Endothelial cell of umbilical vein (primary cell): ENCODE measurements at regions of chr12 and their contacts with region 1.

Region 1: DNA sequence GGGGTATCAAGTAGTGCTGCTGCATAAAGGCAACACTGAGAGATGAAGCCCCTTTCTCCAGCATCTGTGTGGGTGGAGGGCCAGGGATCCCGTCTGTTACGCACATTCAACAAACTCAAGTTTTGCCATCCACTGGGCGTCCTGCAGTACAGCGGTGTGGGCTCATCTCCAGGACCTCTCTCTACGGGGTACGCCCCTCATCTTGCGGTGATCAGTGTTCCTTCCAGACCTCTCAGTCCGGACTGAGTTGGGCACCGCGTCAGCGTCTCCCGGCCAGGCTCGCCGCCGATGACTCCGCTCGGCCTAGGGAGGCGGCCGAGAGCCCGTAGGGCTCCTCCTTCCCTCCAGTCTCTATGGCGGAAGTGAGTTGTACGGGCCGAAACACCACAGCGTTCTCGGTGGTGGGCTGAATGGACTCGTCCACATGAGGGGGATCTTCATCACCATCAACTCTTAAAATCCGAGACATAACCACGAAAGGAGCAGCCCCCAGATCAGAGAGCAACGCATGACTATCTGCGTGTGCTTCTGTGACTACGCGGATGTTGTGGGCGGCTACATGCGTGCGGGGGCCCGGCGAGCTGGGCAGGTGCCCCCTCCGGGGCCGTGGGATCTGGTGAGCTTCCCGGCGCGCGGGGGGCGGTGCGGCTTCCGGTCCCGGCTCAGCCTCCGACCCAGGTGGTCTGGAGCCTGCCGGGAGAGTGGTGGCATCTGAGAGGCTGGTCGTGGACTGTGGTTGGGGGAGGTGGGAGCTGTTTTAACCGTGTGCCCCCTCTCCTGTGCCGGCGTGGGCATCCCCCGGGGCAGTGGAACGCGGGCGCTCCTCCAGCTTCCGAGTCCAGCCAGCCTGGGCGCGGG is at the start of gene ATG101:
- DNase-seq: peak; percentile 95
- H3K4me3 ChIP-seq: peak within 1 kb of the TSS; percentile 69 to 81 (median 73)
- H3K27ac ChIP-seq: peak within 1 kb of the TSS; percentile 93
- H3K4me1 ChIP-seq: peaks cover 12% of the 10 kb centered on the region
- H3K27me3 ChIP-seq: no peaks in the 10 kb centered on the region
- CTCF ChIP-seq: peak; percentile 83 to 90
- POLR2A ChIP-seq: peak; percentile 83
- total RNA-seq, gene ATG101: 41.6 and 43.3 TPM in 2 replicates

Region 2: DNA sequence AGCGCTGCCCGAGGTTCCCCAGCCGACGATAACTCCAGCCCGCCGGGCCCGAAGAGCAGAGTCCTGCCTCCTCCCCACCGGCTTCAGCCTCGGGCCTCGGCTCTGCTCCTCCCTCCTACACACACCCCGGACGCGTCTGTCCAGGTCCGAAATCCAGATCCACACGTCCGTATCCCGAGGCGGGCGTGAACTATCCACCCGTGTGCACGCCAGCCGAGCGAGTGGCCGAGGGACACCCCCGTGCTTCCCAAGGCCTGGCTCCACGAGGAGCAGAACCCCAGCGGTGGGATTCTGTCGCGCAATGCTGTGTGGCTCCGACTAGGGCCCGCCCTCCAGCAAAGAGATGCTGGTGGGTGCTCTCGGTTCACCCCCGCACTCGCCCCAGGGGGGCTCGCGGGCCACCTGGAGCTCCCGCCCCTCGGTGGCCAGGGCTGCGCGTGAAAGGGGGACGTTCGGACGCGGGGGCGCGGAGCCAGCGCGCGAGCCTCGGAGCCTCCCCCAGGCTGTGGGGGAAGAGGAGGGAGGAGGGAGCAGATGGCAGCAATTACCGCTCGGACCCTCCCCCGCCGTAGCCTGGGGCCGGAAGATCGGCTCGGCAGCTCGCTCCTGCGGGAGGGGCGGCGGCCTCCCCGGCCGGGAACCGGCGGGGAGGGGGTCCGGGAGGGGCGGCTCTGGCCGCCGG is 200.6 kb before region 1 on chr12:
- CTCF ChIA-PET with region 1: no interaction called
- POLR2A ChIA-PET with region 1: no interaction called
- dilution Hi-C with region 1: no loop called
- intact Hi-C with region 1: no loop called
- DNase-seq: no peak
- H3K4me3 ChIP-seq: peak overlapping the region; percentile 13 to 23 (median 22)
- H3K27ac ChIP-seq: no peak overlapping the region
- H3K4me1 ChIP-seq: peaks cover 6% of the 10 kb centered on the region
- H3K27me3 ChIP-seq: no peaks in the 10 kb centered on the region
- CTCF ChIP-seq: no peak
- POLR2A ChIP-seq: no peak

Region 3: DNA sequence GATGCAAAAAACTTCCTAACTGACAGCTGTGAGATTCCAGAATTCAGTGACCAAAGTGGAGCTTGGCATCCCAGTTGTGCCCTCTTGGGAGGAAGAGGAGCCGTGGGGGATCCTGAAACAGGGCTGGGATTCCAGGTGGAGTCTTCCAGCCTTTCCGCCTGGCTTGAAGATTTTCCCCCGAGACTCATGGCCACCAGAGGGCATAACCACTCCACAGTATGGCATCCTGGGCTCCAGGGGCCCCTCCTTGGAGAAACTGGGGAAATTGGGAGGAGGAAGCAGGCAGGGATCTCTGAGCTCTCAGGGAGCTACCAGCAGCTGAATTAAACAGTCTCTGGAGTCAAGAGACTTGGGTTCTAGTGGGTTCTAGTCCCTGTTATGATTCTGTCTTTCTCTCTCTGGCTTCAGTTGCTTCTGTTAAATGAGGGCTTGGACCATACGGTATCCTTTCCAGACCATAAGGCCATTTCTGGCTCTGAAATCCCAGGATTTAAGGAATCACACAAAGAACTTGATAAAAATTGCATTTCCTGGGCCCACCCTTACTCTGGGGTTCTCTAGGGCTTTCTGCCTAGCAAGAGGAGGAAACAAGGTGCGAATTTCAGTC is 65.4 kb before region 1 on chr12:
- CTCF ChIA-PET with region 1: interaction called, 15 read pairs
- POLR2A ChIA-PET with region 1: interaction called, 10 read pairs
- dilution Hi-C with region 1: no loop called
- intact Hi-C with region 1: no loop called
- DNase-seq: peak; percentile 60
- H3K4me3 ChIP-seq: no peak overlapping the region
- H3K27ac ChIP-seq: no peak overlapping the region
- H3K4me1 ChIP-seq: peaks cover 22% of the 10 kb centered on the region
- H3K27me3 ChIP-seq: no peaks in the 10 kb centered on the region
- CTCF ChIP-seq: peak; percentile 72 to 79
- POLR2A ChIP-seq: no peak

Region 4: DNA sequence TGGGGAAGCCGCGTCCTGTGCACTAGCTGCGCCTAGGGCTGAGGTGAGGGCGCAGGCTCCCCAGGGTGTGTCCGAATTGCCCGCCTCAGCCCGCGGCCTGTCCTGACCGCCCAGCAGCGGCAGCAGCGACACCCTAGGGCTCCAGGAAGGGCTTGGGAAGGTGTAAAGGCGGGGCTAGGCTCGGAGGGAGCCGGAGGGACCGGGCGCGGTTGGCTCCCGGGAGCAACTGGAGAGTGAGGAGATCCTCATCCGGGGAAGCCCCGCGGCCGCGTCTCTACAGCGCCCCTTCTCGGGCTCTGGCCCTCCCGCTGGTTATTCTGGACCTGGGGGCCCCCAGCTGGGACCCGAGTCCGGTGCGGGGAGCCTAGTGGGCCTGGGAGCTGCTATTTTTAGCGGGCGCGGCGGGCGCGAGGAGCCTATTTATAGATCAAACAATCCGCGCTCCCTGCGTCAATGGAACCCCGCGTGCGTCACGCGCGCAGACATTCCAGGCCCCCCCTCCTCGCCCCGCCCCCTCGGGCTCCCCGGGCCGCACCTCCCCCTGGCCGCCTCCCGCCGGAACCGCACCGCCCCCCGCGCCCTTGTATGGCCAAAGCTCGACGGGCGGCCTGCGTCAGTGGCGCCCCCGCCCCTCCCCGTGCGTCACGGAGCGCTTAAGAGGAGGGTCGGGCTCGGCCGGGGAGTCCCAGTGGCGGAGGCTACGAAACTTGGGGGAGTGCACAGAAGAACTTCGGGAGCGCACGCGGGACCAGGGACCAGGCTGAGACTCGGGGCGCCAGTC is 18.6 kb before region 1 on chr12 and contains the start of gene NR4A1:
- CTCF ChIA-PET with region 1: interaction called, 7 read pairs
- POLR2A ChIA-PET with region 1: no interaction called
- dilution Hi-C with region 1: no loop called
- intact Hi-C with region 1: loop called (anchors 1 kb)
- DNase-seq: peak; percentile 96
- H3K4me3 ChIP-seq: peak within 1 kb of the TSS; percentile 32 to 46 (median 44)
- H3K27ac ChIP-seq: peak within 1 kb of the TSS; percentile 85
- H3K4me1 ChIP-seq: peaks cover 20% of the 10 kb centered on the region
- H3K27me3 ChIP-seq: no peaks in the 10 kb centered on the region
- CTCF ChIP-seq: peak; percentile 5 to 10
- POLR2A ChIP-seq: no peak
- total RNA-seq, gene NR4A1: 6.8 and 10.2 TPM in 2 replicates

Region 5: DNA sequence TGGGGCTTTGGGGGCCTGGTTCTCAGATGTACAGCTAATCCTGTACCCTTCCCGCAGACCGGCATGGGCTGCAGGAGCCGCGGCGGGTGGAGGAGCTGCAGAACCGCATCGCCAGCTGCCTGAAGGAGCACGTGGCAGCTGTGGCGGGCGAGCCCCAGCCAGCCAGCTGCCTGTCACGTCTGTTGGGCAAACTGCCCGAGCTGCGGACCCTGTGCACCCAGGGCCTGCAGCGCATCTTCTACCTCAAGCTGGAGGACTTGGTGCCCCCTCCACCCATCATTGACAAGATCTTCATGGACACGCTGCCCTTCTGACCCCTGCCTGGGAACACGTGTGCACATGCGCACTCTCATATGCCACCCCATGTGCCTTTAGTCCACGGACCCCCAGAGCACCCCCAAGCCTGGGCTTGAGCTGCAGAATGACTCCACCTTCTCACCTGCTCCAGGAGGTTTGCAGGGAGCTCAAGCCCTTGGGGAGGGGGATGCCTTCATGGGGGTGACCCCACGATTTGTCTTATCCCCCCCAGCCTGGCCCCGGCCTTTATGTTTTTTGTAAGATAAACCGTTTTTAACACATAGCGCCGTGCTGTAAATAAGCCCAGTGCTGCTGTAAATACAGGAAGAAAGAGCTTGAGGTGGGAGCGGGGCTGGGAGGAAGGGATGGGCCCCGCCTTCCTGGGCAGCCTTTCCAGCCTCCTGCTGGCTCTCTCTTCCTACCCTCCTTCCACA is 10.8 kb before region 1 on chr12:
- CTCF ChIA-PET with region 1: interaction called, 15 read pairs
- POLR2A ChIA-PET with region 1: no interaction called
- dilution Hi-C with region 1: no loop called
- intact Hi-C with region 1: no loop called
- DNase-seq: no peak
- H3K4me3 ChIP-seq: no peak overlapping the region
- H3K27ac ChIP-seq: no peak overlapping the region
- H3K4me1 ChIP-seq: peaks cover 1% of the 10 kb centered on the region
- H3K27me3 ChIP-seq: no peaks in the 10 kb centered on the region
- CTCF ChIP-seq: no peak
- POLR2A ChIP-seq: no peak

Region 6: GRCh38 chr12:52082988-52083637 is 13.6 kb after region 1 on chr12:
- CTCF ChIA-PET with region 1: interaction called, 24 read pairs
- POLR2A ChIA-PET with region 1: no interaction called
- dilution Hi-C with region 1: no loop called
- intact Hi-C with region 1: no loop called
- DNase-seq: peak; percentile 64
- H3K4me3 ChIP-seq: no peak overlapping the region
- H3K27ac ChIP-seq: no peak overlapping the region
- H3K4me1 ChIP-seq: peaks cover 5% of the 10 kb centered on the region
- H3K27me3 ChIP-seq: no peaks in the 10 kb centered on the region
- CTCF ChIP-seq: peak; percentile 96 to 98
- POLR2A ChIP-seq: no peak

Region 7: GRCh38 chr12:52121824-52122539 is 52.4 kb after region 1 on chr12:
- CTCF ChIA-PET with region 1: interaction called, 8 read pairs
- POLR2A ChIA-PET with region 1: no interaction called
- dilution Hi-C with region 1: no loop called
- intact Hi-C with region 1: loop called (anchors 1 kb)
- DNase-seq: peak; percentile 33
- H3K4me3 ChIP-seq: no peak overlapping the region
- H3K27ac ChIP-seq: no peak overlapping the region
- H3K4me1 ChIP-seq: peaks cover 21% of the 10 kb centered on the region
- H3K27me3 ChIP-seq: peaks cover 0 to 1% of the 10 kb centered on the region in 2 experiments
- CTCF ChIP-seq: peak; percentile 58 to 87
- POLR2A ChIP-seq: no peak